Psoas muscle (tissue), 8 donors: ENCODE measurements at regions of chr2 and their contacts with region 1.

Region 1: DNA sequence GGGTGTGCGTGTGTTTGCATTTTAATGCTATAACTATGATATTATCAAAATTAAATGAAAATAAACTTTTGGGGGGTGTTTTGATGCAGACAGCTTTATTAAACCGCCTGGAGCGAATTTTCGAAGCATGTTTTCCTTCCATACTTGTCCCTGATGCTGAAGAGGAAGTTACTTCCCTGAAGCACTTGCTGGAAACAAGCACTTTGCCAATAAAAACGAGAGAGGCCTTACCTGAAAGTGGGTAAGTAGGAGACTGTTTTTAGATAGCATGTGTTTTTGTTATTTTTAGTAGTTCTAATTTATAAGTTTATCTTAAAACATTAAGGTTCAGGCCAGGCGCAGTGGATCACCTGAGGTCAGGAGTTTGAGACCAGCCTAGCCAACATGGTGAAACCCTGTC is 43.3 kb downstream of the AFTPH start:
- DNase-seq: no peak
- ATAC-seq: no peak
- H3K4me3 ChIP-seq: no peak overlapping the region
- H3K27ac ChIP-seq: no peak overlapping the region
- H3K4me1 ChIP-seq: peaks cover 20% of the 10 kb centered on the region
- H3K27me3 ChIP-seq: no peaks in the 10 kb centered on the region
- CTCF ChIP-seq: no peak

Region 2: GRCh38 chr2:64594226-64594989 is 26.9 kb after region 1 on chr2:
- intact Hi-C with region 1: loop called in 1 of 2 experiments (anchors 1 kb)
- DNase-seq: no peak
- ATAC-seq: no peak
- H3K4me3 ChIP-seq: no peak overlapping the region
- H3K27ac ChIP-seq: no peak overlapping the region
- H3K4me1 ChIP-seq: peaks cover 16% of the 10 kb centered on the region
- H3K27me3 ChIP-seq: no peaks in the 10 kb centered on the region
- CTCF ChIP-seq: no peak